ENCODE measurements at regions of chr12 and their contacts with region 1.

Region 1: GRCh38 chr12:110100315-110100970 is 23.7 kb upstream of the IFT81 start:
- DNase-seq: peak; percentile 77
- ATAC-seq: peak; percentile 70
- H3K4me3 Mint-ChIP-seq: no peak overlapping the region
- H3K27ac Mint-ChIP-seq: no peak overlapping the region
- H3K4me1 Mint-ChIP-seq: peaks cover 9% of the 10 kb centered on the region
- H3K27me3 Mint-ChIP-seq: no peaks in the 10 kb centered on the region

Region 2: DNA sequence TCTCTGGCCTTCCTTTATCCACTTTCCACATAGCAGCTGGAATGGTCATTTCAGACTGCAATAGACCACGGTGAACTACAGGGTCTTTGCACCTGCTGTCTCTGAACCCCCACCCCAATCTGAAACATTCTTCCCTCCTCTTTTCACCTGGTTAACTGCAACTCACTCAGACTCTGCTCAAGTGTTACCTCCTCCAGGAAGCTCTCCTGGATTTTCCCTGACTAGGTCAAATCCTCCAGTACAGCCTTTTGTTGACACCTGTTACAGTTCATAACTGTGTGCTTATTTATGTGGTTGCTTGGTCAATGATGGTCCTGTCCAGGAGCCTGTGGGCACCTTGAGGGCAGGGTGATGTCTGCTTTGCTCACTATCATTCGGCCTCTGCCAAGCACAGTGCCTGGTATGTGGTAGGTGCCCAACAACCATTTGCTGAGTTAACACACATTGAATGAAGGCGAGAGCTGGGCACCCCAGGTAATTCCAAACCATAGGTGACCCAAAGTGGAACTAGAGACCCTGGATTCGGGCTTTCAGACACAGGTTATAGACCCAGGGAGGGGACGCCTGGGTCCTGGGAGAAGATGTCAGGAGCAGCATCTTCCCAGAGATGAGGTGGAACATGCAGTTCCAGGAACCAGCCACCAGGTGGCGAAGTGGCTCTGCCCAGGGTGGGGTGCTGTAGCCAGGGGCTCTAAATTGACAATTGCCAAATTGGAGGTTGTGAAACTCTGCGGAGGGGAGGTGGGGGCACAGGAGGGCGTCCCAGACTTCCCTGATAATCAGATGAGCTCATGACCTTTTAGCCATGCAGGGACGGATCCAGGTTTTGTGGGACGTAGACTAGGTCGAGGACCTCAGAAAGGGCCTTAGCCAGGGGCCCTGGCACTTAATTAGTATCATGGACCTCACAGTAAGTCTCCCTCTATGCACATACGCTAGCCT is 295.4 kb before region 1 on chr12:
- CTCF ChIA-PET with region 1: no interaction called
- POLR2A ChIA-PET with region 1: no interaction called
- intact Hi-C with region 1: loop called in 1 of 2 experiments (anchors 1 kb)
- DNase-seq: peak; percentile 80
- ATAC-seq: peak; percentile 81
- H3K4me3 Mint-ChIP-seq: no peak overlapping the region
- H3K27ac Mint-ChIP-seq: no peak overlapping the region
- H3K4me1 Mint-ChIP-seq: no peaks in the 10 kb centered on the region
- H3K27me3 Mint-ChIP-seq: no peaks in the 10 kb centered on the region

Region 3: DNA sequence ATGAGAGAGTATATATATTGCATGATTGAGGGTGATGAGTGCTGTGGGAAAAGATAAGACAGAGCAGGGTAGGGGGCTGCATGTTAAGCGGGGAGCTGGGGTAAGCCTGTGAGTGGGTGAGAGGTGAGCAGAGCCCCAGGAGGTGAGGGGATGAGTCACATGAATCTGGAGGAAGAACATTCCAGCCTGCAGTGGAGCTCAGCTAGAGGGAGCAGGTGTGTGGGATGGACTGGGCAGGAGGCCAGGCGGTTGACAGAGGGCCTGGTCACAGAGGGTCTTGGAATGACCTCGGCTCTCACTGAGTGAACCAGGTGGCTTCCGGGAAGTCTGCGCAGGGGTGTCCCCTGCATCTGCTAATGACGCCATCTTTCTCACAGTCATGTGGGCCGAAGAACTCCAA is 148.7 kb before region 1 on chr12:
- CTCF ChIA-PET with region 1: no interaction called
- POLR2A ChIA-PET with region 1: no interaction called
- intact Hi-C with region 1: no loop called
- DNase-seq: no peak
- ATAC-seq: no peak
- H3K4me3 Mint-ChIP-seq: no peak overlapping the region
- H3K27ac Mint-ChIP-seq: no peak overlapping the region
- H3K4me1 Mint-ChIP-seq: peaks cover 26% of the 10 kb centered on the region
- H3K27me3 Mint-ChIP-seq: no peaks in the 10 kb centered on the region

Region 4: DNA sequence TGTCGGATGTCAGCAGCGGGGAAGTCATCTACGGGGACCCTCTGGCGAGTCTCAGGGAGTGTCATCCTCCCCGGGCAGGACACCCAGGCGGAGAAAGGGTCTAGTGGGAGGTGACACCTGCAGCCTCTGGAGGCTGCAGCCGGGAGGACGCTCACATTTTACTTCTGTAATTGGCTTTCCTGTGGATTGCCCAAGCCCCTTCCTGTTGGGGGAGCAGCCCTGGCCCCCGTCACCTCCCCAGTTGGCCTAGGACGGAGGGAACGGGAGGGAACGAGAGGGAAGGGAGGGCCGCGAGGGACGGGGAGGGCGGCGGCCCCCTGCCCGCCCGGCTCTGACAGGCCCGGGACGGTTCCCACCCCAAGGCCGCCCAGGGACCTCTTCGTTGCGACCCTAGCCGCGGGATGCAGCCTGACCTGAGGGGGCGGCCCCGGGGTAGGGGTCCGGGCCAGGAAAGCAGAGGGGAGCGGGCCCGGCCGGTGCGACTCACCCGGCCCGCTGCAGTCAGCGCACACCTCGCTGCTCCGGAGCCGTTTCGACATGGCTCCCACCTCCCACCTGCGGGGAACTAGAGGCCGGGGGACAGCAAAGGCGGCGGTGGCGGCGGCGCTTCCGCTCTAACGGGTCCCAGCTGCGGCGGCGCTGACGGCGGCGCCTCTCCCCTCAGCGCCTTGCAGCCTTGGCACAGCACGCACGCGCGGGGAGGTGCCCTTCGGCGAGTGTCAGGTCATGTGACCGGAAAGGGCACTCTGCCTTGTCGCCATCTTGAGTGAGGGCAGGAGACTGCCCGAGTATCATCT is 104.6 kb before region 1 on chr12 and contains the start of gene GIT2:
- CTCF ChIA-PET with region 1: no interaction called
- POLR2A ChIA-PET with region 1: no interaction called
- intact Hi-C with region 1: no loop called
- DNase-seq: peak; percentile 98
- ATAC-seq: peak; percentile 85
- H3K4me3 Mint-ChIP-seq: peak within 1 kb of the TSS; percentile 99
- H3K27ac Mint-ChIP-seq: peak within 1 kb of the TSS; percentile 97
- H3K4me1 Mint-ChIP-seq: peaks cover 65% of the 10 kb centered on the region
- H3K27me3 Mint-ChIP-seq: no peaks in the 10 kb centered on the region
- total RNA-seq, gene GIT2: 50.2 to 58.2 TPM

Region 5: GRCh38 chr12:110088936-110089335 is 11.5 kb before region 1 on chr12:
- CTCF ChIA-PET with region 1: interaction called, 11 read pairs
- POLR2A ChIA-PET with region 1: no interaction called
- intact Hi-C with region 1: no loop called
- DNase-seq: no peak
- ATAC-seq: no peak
- H3K4me3 Mint-ChIP-seq: no peak overlapping the region
- H3K27ac Mint-ChIP-seq: no peak overlapping the region
- H3K4me1 Mint-ChIP-seq: no peaks in the 10 kb centered on the region
- H3K27me3 Mint-ChIP-seq: peaks cover 15% of the 10 kb centered on the region

Region 6: GRCh38 chr12:110114528-110114937 is 14.1 kb after region 1 on chr12:
- CTCF ChIA-PET with region 1: interaction called, 11 read pairs
- POLR2A ChIA-PET with region 1: no interaction called
- intact Hi-C with region 1: no loop called
- DNase-seq: no peak
- ATAC-seq: no peak
- H3K4me3 Mint-ChIP-seq: no peak overlapping the region
- H3K27ac Mint-ChIP-seq: no peak overlapping the region
- H3K4me1 Mint-ChIP-seq: no peaks in the 10 kb centered on the region
- H3K27me3 Mint-ChIP-seq: peaks cover 4% of the 10 kb centered on the region

Region 7: DNA sequence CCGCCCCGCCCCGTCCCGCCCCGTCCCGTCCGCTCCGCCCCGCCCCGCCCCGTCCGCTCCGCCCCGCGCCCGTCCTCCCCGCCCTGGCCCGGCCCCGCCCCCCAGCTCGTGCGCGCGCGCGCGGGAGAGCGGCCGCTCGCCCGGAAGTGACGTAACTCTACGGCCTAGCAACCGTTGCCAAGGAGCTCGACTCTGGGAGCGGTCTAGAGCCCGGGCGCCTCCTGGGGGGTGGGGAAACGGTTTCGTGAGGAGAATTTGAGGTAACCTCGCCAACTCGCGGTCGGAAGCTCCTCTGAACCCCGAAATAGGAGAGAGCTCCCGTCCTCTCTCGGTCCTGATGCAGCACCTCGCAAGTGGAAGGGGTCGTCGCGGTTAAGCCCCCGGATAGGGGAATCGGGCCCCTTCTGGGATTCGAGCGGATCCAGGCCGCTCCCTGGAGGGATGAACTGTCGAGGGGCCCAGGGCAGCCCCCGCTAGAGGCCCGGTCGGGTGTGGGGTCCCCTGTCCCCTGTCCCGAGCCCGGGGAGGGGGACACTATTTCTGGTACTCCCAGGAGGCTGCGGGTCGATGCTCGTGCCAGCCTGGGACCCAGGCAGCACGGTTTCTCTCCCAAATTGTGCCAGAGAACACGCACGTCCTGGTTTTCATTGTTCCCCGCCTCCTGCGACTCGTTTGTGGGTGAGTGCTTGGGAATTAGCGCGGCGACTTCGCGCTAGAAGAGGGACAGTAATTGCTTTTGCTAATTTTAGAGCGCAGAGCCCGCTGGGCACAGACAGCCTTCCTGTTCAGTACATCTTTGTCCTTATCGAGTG is 23.9 kb after region 1 on chr12 and contains the start of gene IFT81:
- CTCF ChIA-PET with region 1: interaction called, 7 read pairs
- POLR2A ChIA-PET with region 1: no interaction called
- intact Hi-C with region 1: loop called in 1 of 2 experiments (anchors 1 kb)
- DNase-seq: peak; percentile 98
- ATAC-seq: peak; percentile 91
- H3K4me3 Mint-ChIP-seq: peak within 1 kb of the TSS; percentile 83
- H3K27ac Mint-ChIP-seq: peak within 1 kb of the TSS; percentile 81
- H3K4me1 Mint-ChIP-seq: peaks cover 7% of the 10 kb centered on the region
- H3K27me3 Mint-ChIP-seq: peaks cover 4% of the 10 kb centered on the region
- total RNA-seq, gene IFT81: 3.5 TPM

Region 8: DNA sequence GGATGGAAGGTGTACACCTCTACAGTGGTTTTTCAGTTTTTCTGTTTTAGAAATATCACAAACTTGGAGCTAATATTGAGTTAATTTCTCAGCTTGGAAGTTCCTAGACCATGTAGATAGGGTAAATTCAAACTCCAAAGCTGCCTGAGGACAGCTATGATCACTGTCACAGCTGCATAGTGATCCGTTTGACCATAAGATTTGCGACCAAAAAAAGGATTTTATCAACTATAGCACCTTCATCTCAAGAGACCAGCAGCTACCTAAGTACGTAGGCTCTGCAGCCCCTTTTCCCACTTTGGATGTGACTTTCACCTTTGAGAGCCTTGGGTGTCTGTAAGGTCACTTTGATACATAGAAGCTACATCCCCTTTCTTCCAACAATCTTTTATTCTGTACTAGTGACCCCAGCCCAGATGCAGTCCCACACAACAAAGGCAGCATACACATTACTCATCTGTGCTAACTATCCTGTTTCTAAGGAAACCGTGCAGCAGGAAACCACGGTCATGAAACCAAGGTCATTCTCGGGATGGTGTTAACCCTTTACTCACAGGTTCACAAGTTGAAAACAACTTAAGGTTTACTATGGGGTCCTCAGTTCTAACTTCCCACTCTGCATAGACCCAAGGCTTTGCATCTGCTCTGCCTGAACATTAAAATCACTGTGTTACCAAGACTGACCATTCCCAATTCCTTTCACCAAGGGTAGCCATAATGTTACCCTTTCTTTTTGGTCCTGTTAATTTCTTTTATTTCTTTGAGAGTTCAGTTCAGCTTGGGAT is 99.1 kb after region 1 on chr12:
- CTCF ChIA-PET with region 1: no interaction called
- POLR2A ChIA-PET with region 1: no interaction called
- intact Hi-C with region 1: no loop called
- DNase-seq: peak; percentile 28
- ATAC-seq: peak; percentile 87
- H3K4me3 Mint-ChIP-seq: no peak overlapping the region
- H3K27ac Mint-ChIP-seq: no peak overlapping the region
- H3K4me1 Mint-ChIP-seq: peaks cover 8% of the 10 kb centered on the region
- H3K27me3 Mint-ChIP-seq: no peaks in the 10 kb centered on the region

Region 9: GRCh38 chr12:110245369-110245772 is 144.9 kb after region 1 on chr12:
- CTCF ChIA-PET with region 1: interaction called, 14 read pairs
- POLR2A ChIA-PET with region 1: no interaction called
- intact Hi-C with region 1: loop called (anchors 1 kb)
- DNase-seq: peak; percentile 69
- ATAC-seq: peak; percentile 84
- H3K4me3 Mint-ChIP-seq: no peak overlapping the region
- H3K27ac Mint-ChIP-seq: no peak overlapping the region
- H3K4me1 Mint-ChIP-seq: no peaks in the 10 kb centered on the region
- H3K27me3 Mint-ChIP-seq: peaks cover 4% of the 10 kb centered on the region

Region 10: GRCh38 chr12:110338754-110339153 is 238.3 kb after region 1 on chr12:
- CTCF ChIA-PET with region 1: no interaction called
- POLR2A ChIA-PET with region 1: no interaction called
- intact Hi-C with region 1: loop called in 1 of 2 experiments (anchors 1 kb)
- DNase-seq: no peak
- ATAC-seq: peak; percentile 30
- H3K4me3 Mint-ChIP-seq: no peak overlapping the region
- H3K27ac Mint-ChIP-seq: peak overlapping the region; percentile 39
- H3K4me1 Mint-ChIP-seq: no peaks in the 10 kb centered on the region
- H3K27me3 Mint-ChIP-seq: no peaks in the 10 kb centered on the region

Measured in activated CD4-positive, alpha-beta T cell treated with anti-CD3 and anti-CD28 coated beads for 36 hours (primary cell).